Natural killer cell (primary cell): ENCODE measurements at regions of chr2 and their contacts with region 1.

Region 1: DNA sequence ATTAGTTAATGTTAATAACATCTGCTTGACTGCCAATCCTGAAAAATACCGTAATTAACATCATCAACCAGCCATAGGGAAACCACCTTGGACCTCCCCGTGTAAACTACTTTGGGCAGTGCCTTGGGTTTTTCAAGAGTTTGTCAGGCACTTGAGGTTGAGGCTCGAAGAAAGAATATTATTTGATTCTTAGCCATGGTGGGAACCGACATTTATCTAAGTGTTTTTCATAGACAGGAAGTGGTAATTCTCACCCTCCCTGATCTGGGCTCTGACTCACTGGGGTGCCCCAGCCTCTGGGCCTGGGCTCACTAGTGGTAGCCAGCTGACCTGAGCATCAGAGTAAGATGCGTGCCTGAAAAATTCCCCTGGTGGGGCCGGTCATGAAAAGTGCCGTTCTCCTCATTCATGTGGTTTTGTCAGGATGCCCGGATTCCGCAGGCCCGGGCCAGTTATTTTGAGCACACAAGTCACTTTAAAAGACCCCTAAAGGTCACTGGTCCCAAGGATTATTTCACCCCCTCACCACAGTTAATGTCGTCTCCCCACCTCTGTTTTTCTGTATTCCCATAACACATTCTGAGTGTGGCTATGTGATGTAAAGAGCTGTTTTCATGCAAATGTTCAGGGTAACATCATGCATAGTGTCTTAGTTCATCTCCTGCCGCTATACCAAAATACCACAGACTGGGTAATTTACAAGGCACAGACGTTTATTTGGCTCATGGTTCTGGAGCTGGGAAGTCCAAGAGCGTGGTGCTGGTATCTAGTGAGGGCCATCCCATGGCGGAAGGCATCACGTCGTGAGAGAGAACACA is 21.6 kb upstream of the SPATA3 start:
- DNase-seq: peak; percentile 78 to 91
- ATAC-seq: peak; percentile 87 to 96 (median 93)
- H3K4me3 ChIP-seq: no peak overlapping the region
- H3K4me3 Mint-ChIP-seq: peak overlapping the region; percentile 81
- H3K27ac ChIP-seq: peak overlapping the region; percentile 77
- H3K27ac Mint-ChIP-seq: peak overlapping the region; percentile 96 to 97
- H3K4me1 ChIP-seq: peaks cover 43% of the 10 kb centered on the region
- H3K4me1 Mint-ChIP-seq: peaks cover 22 to 41% of the 10 kb centered on the region in 2 donors
- H3K27me3 ChIP-seq: no peaks in the 10 kb centered on the region
- H3K27me3 Mint-ChIP-seq: peaks cover 25 to 47% of the 10 kb centered on the region in 2 donors
- CTCF ChIP-seq: no peak

Region 2: DNA sequence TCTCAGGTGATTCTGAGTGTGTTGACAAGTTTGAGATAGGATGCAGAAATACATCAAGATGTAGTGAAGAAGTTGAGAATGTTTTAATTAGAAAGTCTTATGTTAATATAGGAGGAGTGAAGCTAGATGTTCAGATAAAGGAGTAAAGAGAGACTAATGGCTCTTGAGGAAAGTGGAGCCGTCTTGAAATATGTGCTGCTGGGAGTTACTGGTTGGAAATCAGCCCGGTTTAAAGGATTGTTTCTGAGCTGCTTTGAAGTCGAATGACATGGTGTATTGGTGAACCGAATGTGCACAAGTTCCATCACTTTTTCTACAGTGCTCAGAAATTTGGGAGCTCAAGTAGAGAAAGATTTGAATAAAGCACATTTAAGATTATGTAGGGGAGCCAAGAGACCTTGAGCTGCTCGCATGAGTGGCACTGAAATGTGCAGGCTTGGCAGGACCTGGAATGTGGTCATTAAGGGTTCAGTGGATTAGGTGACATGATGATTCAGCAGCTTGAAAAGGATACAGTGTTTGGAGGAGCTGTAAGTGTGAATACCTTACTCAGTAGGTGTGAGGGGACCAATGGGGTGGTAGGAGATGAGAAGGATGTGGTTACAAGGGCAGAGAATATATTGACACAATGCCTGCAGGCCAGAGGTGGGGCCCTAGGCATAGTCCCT is 193.0 kb before region 1 on chr2:
- intact Hi-C with region 1: no loop called
- DNase-seq: peak; percentile 51 to 76
- ATAC-seq: peak; percentile 91 to 96 (median 93)
- H3K4me3 ChIP-seq: no peak overlapping the region
- H3K4me3 Mint-ChIP-seq: peak overlapping the region; percentile 67
- H3K27ac ChIP-seq: no peak overlapping the region
- H3K27ac Mint-ChIP-seq: peak overlapping the region; percentile 54 to 67
- H3K4me1 ChIP-seq: peaks cover 46% of the 10 kb centered on the region
- H3K4me1 Mint-ChIP-seq: peaks cover 69 to 82% of the 10 kb centered on the region in 2 donors
- H3K27me3 ChIP-seq: no peaks in the 10 kb centered on the region
- H3K27me3 Mint-ChIP-seq: no peaks in the 10 kb centered on the region
- CTCF ChIP-seq: no peak

Region 3: GRCh38 chr2:230877732-230878598 is 96.3 kb before region 1 on chr2:
- intact Hi-C with region 1: loop called (anchors 1 kb)
- DNase-seq: peak; percentile 78 to 86
- ATAC-seq: peak; percentile 84 to 92 (median 91)
- H3K4me3 ChIP-seq: no peak overlapping the region
- H3K4me3 Mint-ChIP-seq: peak overlapping the region; percentile 79
- H3K27ac ChIP-seq: peak overlapping the region; percentile 35
- H3K27ac Mint-ChIP-seq: peak overlapping the region; percentile 70 to 86
- H3K4me1 ChIP-seq: peaks cover 57% of the 10 kb centered on the region
- H3K4me1 Mint-ChIP-seq: peaks cover 28 to 43% of the 10 kb centered on the region in 2 donors
- H3K27me3 ChIP-seq: peaks cover 30% of the 10 kb centered on the region
- H3K27me3 Mint-ChIP-seq: peaks cover 45 to 46% of the 10 kb centered on the region in 2 donors
- CTCF ChIP-seq: no peak

Region 4: GRCh38 chr2:230932556-230933511 is 41.5 kb before region 1 on chr2:
- intact Hi-C with region 1: loop called (anchors 5 kb)
- DNase-seq: no peak
- ATAC-seq: peak in 2 of 3 donors; percentile 35 to 38
- H3K4me3 ChIP-seq: no peak overlapping the region
- H3K4me3 Mint-ChIP-seq: peak overlapping the region; percentile 73
- H3K27ac ChIP-seq: no peak overlapping the region
- H3K27ac Mint-ChIP-seq: peak overlapping the region in 1 of 2 donors; percentile 74
- H3K4me1 ChIP-seq: peaks cover 50% of the 10 kb centered on the region
- H3K4me1 Mint-ChIP-seq: peaks cover 34 to 45% of the 10 kb centered on the region in 2 donors
- H3K27me3 ChIP-seq: peaks cover 9% of the 10 kb centered on the region
- H3K27me3 Mint-ChIP-seq: peaks cover 35 to 42% of the 10 kb centered on the region in 2 donors
- CTCF ChIP-seq: no peak

Region 5: GRCh38 chr2:231017231-231017598 is 42.9 kb after region 1 on chr2:
- intact Hi-C with region 1: no loop called
- DNase-seq: peak in 1 of 2 donors; percentile 23
- ATAC-seq: no peak
- H3K4me3 ChIP-seq: no peak overlapping the region
- H3K4me3 Mint-ChIP-seq: no peak overlapping the region
- H3K27ac ChIP-seq: no peak overlapping the region
- H3K27ac Mint-ChIP-seq: no peak overlapping the region
- H3K4me1 ChIP-seq: peaks cover 4% of the 10 kb centered on the region
- H3K4me1 Mint-ChIP-seq: peaks cover 0 to 8% of the 10 kb centered on the region in 2 donors
- H3K27me3 ChIP-seq: peaks cover 12% of the 10 kb centered on the region
- H3K27me3 Mint-ChIP-seq: peaks cover 31 to 64% of the 10 kb centered on the region in 2 donors
- CTCF ChIP-seq: no peak